ENCODE measurements at regions of chrX and their contacts with region 1.

Region 1: GRCh38 chrX:150513544-150513943 is 54.9 kb upstream of the MTM1 start:
- DNase-seq: no peak
- H3K4me3 ChIP-seq: no peak overlapping the region
- H3K27ac ChIP-seq: no peak overlapping the region
- H3K4me1 ChIP-seq: peaks cover 0 to 9% (median 3%) of the 10 kb centered on the region in 4 experiments; a peak in 3 of 7 replicates
- H3K27me3 ChIP-seq: no peaks in the 10 kb centered on the region
- CTCF ChIP-seq: peak in 2 of 3 experiments; percentile 25 to 28; a peak in 2 of 4 replicates
- EP300 ChIP-seq: no peak
- POLR2A ChIP-seq: no peak
- RAD21 ChIP-seq: peak; percentile 20 to 43; a peak in 3 of 4 replicates

Region 2: DNA sequence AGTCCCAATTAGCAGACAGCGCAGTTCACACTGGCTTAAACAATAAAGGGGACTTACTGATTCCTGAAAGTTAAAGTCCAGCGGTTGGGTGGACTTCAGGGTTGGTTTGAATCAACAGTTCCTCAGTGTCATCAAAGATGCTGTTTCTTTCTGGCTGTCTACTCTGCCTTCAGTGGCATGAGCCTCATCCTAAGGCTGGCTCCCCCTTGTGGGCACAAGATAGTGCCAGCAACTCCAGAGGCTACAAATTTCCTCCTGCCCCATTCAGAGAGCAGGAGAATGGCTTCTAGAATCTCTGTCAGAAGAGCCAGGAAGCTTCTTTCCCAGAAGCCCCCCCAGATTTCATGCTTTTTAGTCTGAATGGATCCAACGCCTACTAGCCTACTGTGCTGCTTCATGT is 27.5 kb before region 1 on chrX:
- CTCF ChIA-PET with region 1: interaction called, 10 read pairs
- POLR2A ChIA-PET with region 1: no interaction called
- DNase-seq: peak in 1 of 2 experiments; percentile 53
- H3K4me3 ChIP-seq: no peak overlapping the region
- H3K27ac ChIP-seq: no peak overlapping the region
- H3K4me1 ChIP-seq: no peaks in the 10 kb centered on the region
- H3K27me3 ChIP-seq: no peaks in the 10 kb centered on the region
- CTCF ChIP-seq: peak; percentile 63 to 73 (median 69)
- EP300 ChIP-seq: no peak
- POLR2A ChIP-seq: no peak
- RAD21 ChIP-seq: peak; percentile 60 to 69

Region 3: DNA sequence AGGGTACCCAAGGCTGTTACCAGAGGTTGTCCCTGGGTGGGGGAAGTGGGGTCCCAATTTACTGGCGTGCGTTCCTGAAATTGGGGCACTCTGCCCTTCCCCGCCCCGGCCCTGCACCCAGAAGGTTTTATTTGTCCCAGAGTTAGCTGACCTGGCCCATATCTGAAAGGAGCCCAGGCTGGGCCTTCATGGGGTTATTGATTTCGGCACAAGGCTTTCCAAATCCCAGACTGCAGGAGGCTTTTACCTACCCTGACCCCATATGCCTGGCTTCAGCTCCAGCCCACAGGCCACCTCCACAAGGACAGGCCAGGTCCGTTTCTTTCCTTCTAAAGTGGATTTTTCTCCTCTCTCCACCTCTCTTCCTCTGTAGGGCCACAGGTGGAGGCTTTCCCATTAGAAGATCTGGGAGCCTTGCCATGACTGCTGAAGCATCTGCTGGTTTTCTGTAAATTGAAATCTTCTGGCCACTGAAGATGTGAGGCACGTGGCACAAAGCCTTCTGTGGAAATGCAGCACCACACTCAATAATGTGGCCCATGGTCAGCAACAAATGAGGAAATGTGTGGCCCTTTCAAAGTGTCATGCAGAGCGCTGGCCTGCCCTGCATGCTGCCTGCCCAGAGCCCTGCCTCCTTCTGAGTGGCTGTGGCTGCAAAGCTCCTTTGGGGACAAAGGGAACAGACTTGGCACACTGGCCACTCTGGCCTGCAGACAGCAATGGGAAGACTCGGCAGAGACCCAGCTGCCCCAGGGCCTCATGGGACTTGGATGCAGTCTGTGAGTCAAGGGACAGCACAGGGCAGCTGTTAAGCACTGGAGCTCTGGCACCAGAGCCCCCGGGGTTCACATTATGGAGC is 11.7 kb after region 1 on chrX:
- CTCF ChIA-PET with region 1: interaction called, 14 read pairs
- POLR2A ChIA-PET with region 1: no interaction called
- DNase-seq: no peak
- H3K4me3 ChIP-seq: no peak overlapping the region
- H3K27ac ChIP-seq: no peak overlapping the region
- H3K4me1 ChIP-seq: no peaks in the 10 kb centered on the region
- H3K27me3 ChIP-seq: no peaks in the 10 kb centered on the region
- CTCF ChIP-seq: no peak
- EP300 ChIP-seq: no peak
- POLR2A ChIP-seq: no peak
- RAD21 ChIP-seq: no peak

Region 4: DNA sequence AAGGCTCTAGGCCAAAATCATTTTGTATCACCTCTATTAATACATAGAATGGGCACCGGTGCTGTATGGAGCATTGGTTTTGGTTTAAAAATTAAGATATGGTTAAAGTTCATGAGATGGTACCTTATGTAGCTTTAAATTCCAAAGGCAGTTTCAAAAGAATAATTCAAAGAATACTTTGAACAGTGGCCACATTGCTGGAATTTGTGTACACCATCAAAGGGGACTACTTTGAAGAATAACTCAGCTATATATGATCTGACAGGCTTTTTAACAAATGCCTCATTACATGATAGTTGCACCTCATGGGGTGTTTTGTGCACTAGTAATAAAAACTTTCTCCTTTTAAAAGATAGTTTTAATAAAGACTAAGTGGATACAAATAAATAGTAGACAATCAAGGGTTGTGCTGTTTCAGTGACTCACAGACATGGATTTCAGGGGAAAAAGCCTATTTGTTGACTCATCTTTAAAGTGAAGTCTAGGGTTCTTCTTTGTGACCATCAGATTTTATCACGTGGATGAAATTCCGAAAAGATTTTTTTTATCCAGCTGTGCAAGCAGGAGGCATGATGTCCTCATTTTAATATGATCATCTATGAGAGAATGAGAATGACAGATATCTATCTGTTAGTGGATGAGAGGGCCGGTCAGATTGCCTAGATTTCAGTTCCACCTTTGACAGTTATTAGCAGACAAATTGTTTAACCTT is 67.7 kb after region 1 on chrX:
- CTCF ChIA-PET with region 1: no interaction called
- POLR2A ChIA-PET with region 1: no interaction called
- DNase-seq: no peak
- H3K4me3 ChIP-seq: no peak overlapping the region
- H3K27ac ChIP-seq: no peak overlapping the region
- H3K4me1 ChIP-seq: no peaks in the 10 kb centered on the region
- H3K27me3 ChIP-seq: no peaks in the 10 kb centered on the region
- CTCF ChIP-seq: no peak
- EP300 ChIP-seq: no peak
- POLR2A ChIP-seq: no peak
- RAD21 ChIP-seq: no peak

Measured in H1 (cell line).